Transverse colon (tissue), 4 donors: ENCODE measurements at regions of chr1 and their contacts with region 1.

Region 1: GRCh38 chr1:181676269-181676668 is 193.0 kb downstream of the CACNA1E start:
- DNase-seq: peak; percentile 49
- H3K4me3 ChIP-seq: no peak overlapping the region
- H3K27ac ChIP-seq: no peak overlapping the region
- H3K4me1 ChIP-seq: no peaks in the 10 kb centered on the region
- H3K27me3 ChIP-seq: no peaks in the 10 kb centered on the region
- CTCF ChIP-seq: peak; percentile 22 to 62 (median 45)
- EP300 ChIP-seq: no peak
- POLR2A ChIP-seq: no peak

Region 2: GRCh38 chr1:180863158-180863775 is 813.0 kb before region 1 on chr1:
- in situ Hi-C with region 1: no loop called
- intact Hi-C with region 1: no loop called
- DNase-seq: peak; percentile 11
- H3K4me3 ChIP-seq: no peak overlapping the region
- H3K27ac ChIP-seq: no peak overlapping the region
- H3K4me1 ChIP-seq: no peaks in the 10 kb centered on the region
- H3K27me3 ChIP-seq: no peaks in the 10 kb centered on the region
- CTCF ChIP-seq: peak; percentile 62 to 78 (median 73)
- EP300 ChIP-seq: no peak
- POLR2A ChIP-seq: no peak

Region 3: DNA sequence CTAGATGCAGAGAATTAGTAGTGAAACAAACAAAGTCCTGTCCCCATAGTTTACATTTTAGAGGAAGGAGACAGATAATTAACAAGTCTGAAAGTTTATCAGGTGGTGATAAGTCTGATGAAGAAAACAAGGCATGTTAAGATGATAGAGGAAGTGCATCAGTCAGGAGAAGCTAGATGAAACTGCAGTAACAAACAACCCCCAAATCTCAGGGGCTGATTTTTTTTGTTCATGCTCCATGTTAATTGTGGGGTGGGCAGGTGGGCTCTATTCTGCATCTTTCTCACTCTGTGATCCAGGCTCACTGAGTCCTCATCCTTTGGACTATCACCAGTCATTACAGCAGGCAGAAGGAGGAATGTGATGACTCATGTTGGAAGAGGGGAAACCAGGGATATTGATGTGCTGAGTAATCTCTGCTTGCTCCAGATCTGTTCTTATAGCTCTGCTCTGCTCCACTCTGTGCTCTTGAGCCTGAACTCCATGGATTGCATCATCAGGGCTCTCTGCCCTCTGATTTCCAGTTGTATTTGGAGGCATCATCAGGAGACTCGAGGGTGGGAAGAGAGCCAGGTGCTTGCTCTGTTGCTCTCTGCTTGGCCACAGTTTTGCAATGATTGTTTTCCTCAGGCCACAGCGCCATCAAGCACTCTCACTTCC is 420.9 kb before region 1 on chr1:
- in situ Hi-C with region 1: no loop called
- intact Hi-C with region 1: no loop called
- DNase-seq: no peak
- H3K4me3 ChIP-seq: no peak overlapping the region
- H3K27ac ChIP-seq: no peak overlapping the region
- H3K4me1 ChIP-seq: no peaks in the 10 kb centered on the region
- H3K27me3 ChIP-seq: no peaks in the 10 kb centered on the region
- CTCF ChIP-seq: no peak
- EP300 ChIP-seq: no peak
- POLR2A ChIP-seq: no peak

Region 4: DNA sequence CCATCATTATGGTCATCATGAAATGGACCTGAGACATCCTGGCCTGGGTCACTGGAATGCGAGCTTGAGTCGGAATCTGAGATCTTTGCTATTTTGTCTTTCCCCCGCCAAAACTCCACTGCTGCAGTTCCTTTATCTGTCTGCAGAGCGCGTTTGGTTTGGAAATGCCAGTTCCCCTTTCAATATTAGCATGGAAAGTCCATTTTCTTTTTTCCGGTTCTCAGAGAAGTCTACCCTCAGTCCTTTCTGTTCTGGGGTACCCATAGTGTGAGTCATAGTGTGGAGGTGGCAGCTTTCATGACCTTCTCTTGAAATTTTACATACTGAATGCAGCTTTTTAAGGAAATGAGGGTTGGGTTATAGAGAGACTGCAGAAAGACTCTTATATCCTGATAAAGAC is 178.4 kb before region 1 on chr1:
- in situ Hi-C with region 1: loop called in 1 of 4 experiments (anchors 10 kb)
- intact Hi-C with region 1: no loop called
- DNase-seq: no peak
- H3K4me3 ChIP-seq: no peak overlapping the region
- H3K27ac ChIP-seq: no peak overlapping the region
- H3K4me1 ChIP-seq: no peaks in the 10 kb centered on the region
- H3K27me3 ChIP-seq: no peaks in the 10 kb centered on the region
- CTCF ChIP-seq: no peak
- EP300 ChIP-seq: no peak
- POLR2A ChIP-seq: no peak

Region 5: DNA sequence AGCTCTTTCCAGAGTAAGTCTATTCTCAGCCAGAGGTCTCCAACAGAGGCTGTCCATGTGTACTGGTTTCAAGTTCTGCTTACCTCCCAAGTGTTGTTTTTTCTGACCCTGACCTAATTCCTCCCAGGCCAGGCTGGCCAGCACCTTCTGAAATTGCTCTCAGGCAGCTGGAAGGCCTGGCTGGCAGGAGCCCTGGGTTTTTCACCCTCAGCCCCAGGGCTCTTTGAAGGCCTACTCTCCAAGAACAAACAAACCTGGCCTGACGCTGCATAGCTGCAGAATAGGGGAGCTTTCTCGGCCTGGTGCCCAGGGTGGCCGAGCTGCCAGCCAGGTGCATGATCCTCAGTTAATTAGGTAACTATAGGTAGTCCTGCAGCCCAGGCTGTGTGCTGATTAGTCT is 45.4 kb before region 1 on chr1:
- in situ Hi-C with region 1: no loop called
- intact Hi-C with region 1: loop called (anchors 1 kb)
- DNase-seq: no peak
- H3K4me3 ChIP-seq: no peak overlapping the region
- H3K27ac ChIP-seq: no peak overlapping the region
- H3K4me1 ChIP-seq: peaks cover 0 to 15% (median 2%) of the 10 kb centered on the region in 4 donors
- H3K27me3 ChIP-seq: no peaks in the 10 kb centered on the region
- CTCF ChIP-seq: no peak
- EP300 ChIP-seq: no peak
- POLR2A ChIP-seq: no peak